ENCODE measurements at regions of chr5 and their contacts with region 1.

Region 1: DNA sequence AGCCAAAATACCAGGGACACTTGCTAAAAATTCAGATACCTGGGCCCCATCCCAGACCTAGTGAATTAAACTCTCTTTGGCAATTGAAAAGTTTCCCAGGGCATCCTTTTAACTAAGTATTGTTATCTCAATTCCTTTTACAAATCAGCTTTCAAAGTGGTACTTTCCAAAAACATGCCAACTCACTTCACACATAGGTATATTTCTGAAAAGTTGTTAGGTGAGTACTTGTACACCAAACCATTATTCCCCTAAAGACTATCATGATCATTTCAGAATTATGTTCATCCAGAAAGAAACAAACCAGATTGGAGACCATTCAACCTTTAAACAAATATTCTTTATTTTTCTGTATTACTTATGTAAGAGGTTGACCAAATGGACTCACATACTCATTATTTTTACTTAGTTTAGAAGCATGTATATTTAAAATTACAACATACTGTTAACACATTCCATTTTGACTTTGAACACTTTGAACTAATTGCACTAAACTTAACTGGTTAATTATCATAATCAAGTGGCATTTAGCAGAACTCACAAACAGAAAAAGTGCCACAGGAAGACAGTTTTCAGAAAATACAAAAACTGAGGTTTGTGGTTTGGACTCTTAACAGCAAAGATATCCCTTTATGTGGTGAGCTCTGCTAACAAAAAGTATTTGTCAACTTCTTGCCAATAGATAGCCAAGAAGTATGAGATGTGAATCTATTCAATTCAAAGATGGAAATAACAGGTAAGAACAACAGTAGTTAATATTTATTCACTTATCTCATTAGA is 40.7 kb downstream of the KIAA0825 start:
- DNase-seq: peak; percentile 45
- ATAC-seq: peak; percentile 86
- H3K4me3 ChIP-seq: no peak overlapping the region
- H3K27ac ChIP-seq: peak overlapping the region; percentile 28; the same call in 1 of the 2 replicates
- H3K4me1 ChIP-seq: peaks cover 20% of the 10 kb centered on the region
- H3K27me3 ChIP-seq: no peaks in the 10 kb centered on the region
- CTCF ChIP-seq: no peak
- EP300 ChIP-seq: peak; percentile 44 to 69; a peak in 2 of 4 replicates
- POLR2A ChIP-seq: no peak
- RAD21 ChIP-seq: no peak

Region 2: DNA sequence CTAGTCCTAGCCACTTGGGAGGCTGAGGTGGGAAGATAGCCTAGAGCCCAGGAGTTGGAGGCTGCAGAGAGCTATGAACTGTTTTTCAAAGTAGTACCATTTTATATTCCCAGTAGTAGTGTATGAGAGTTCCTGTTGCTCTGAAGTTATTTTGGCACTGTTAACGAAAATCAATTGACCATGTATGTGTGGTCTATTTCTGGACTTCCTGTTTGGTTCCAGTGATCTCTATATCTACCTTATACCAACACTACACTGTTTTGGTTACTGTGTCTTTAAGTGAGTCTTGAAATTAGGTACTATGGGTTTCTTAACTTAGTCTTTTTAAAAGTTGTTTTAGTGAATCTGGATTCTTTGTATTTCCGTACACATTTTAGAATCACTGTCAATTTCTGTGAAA is 54.4 kb after region 1 on chr5:
- CTCF ChIA-PET with region 1: interaction called, 5 read pairs
- POLR2A ChIA-PET with region 1: no interaction called
- RAD21 ChIA-PET with region 1: no interaction called
- SMC1A ChIA-PET with region 1: interaction called, 10 read pairs
- in situ Hi-C with region 1: no loop called
- intact Hi-C with region 1: no loop called
- DNase-seq: peak; percentile 41
- ATAC-seq: peak; percentile 99
- H3K4me3 ChIP-seq: no peak overlapping the region
- H3K27ac ChIP-seq: peak overlapping the region; percentile 46
- H3K4me1 ChIP-seq: peaks cover 7% of the 10 kb centered on the region
- H3K27me3 ChIP-seq: no peaks in the 10 kb centered on the region
- CTCF ChIP-seq: no peak
- EP300 ChIP-seq: peak in 1 of 2 experiments; percentile 54; a peak in 1 of 4 replicates
- POLR2A ChIP-seq: no peak
- RAD21 ChIP-seq: no peak